Mammary epithelial cell (primary cell): ENCODE measurements at regions of chr2 and their contacts with region 1.

Region 1: GRCh38 chr2:212610872-212611465 is 72.4 kb upstream of the ERBB4 start:
- DNase-seq: no peak
- H3K4me3 ChIP-seq: no peak overlapping the region
- H3K27ac ChIP-seq: no peak overlapping the region
- H3K4me1 ChIP-seq: no peaks in the 10 kb centered on the region
- H3K27me3 ChIP-seq: no peaks in the 10 kb centered on the region
- CTCF ChIP-seq: no peak

Region 2: GRCh38 chr2:212711856-212712255 is 100.9 kb after region 1 on chr2:
- CTCF ChIA-PET with region 1: no interaction called
- dilution Hi-C with region 1: loop called (anchors 5 kb)
- in situ Hi-C with region 1: no loop called
- intact Hi-C with region 1: no loop called
- DNase-seq: peak; percentile 79
- H3K4me3 ChIP-seq: no peak overlapping the region
- H3K27ac ChIP-seq: peak overlapping the region; percentile 78
- H3K4me1 ChIP-seq: peaks cover 26% of the 10 kb centered on the region
- H3K27me3 ChIP-seq: no peaks in the 10 kb centered on the region
- CTCF ChIP-seq: no peak

Region 3: GRCh38 chr2:212797484-212798205 is 186.7 kb after region 1 on chr2:
- CTCF ChIA-PET with region 1: no interaction called
- dilution Hi-C with region 1: no loop called
- in situ Hi-C with region 1: no loop called
- intact Hi-C with region 1: no loop called
- DNase-seq: no peak
- H3K4me3 ChIP-seq: no peak overlapping the region
- H3K27ac ChIP-seq: no peak overlapping the region
- H3K4me1 ChIP-seq: peaks cover 4% of the 10 kb centered on the region
- H3K27me3 ChIP-seq: no peaks in the 10 kb centered on the region
- CTCF ChIP-seq: no peak